Esophagus muscularis mucosa (tissue), 4 donors: ENCODE measurements at regions of chr17 and their contacts with region 1.

Region 1: DNA sequence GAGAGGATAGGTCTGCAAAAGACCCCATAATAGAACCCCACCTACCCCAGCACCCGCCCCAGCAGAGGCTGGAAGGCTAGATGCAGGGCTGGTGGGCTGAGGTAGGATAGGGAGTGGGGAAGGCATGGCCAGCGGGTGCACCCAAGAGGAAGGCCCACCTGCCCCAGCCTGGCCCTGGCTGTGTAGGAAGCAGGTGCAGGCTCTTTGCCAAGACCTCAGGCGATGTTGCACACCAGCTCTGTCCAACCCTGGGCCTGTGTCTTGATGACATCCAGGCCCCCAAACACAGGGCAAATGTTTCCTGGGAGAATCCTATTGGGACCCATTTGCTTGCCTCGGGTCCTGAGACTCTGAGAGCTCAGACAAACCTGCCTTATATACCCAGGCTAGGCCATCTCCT is 12.2 kb downstream of the UNC119 start:
- DNase-seq: no peak
- H3K4me3 ChIP-seq: no peak overlapping the region
- H3K27ac ChIP-seq: no peak overlapping the region
- H3K4me1 ChIP-seq: no peaks in the 10 kb centered on the region
- H3K27me3 ChIP-seq: no peaks in the 10 kb centered on the region
- CTCF ChIP-seq: no peak
- EP300 ChIP-seq: no peak
- POLR2A ChIP-seq: no peak

Region 2: DNA sequence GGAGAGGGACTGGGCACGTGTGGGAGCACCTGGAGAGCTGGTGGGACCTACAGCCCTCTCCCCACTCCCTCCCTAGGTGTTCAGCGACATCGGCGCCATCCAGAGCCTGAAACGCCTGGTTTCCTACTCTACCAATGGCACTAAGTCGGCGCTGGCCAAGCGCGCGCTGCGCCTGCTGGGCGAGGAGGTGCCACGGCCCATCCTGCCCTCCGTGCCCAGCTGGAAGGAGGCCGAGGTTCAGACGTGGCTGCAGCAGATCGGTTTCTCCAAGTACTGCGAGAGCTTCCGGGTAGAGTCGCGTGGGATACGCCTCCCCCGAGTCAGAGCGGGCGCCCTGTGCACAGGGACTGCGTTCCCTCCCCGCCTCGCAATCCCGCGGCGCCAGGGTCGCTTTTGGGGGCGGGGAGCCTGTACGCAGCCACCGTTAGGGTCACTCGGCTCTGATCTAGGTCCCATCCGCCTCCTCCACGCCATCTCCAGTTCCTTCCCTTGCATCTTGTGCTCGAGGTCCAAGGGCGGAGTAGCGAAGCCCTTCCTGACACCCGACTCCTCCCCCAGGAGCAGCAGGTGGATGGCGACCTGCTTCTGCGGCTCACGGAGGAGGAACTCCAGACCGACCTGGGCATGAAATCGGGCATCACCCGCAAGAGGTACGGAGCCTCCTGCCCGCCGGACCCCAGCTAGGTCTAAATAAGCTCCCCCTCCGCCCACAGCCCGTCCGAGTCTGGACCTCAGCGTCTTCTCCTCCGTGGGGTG is 155.8 kb before region 1 on chr17:
- intact Hi-C with region 1: no loop called
- DNase-seq: no peak
- H3K4me3 ChIP-seq: peak overlapping the region; percentile 46 to 59 (median 46)
- H3K27ac ChIP-seq: no peak overlapping the region
- H3K4me1 ChIP-seq: peaks cover 8 to 15% (median 11%) of the 10 kb centered on the region in 4 donors
- H3K27me3 ChIP-seq: no peaks in the 10 kb centered on the region
- CTCF ChIP-seq: no peak
- EP300 ChIP-seq: no peak
- POLR2A ChIP-seq: no peak

Region 3: DNA sequence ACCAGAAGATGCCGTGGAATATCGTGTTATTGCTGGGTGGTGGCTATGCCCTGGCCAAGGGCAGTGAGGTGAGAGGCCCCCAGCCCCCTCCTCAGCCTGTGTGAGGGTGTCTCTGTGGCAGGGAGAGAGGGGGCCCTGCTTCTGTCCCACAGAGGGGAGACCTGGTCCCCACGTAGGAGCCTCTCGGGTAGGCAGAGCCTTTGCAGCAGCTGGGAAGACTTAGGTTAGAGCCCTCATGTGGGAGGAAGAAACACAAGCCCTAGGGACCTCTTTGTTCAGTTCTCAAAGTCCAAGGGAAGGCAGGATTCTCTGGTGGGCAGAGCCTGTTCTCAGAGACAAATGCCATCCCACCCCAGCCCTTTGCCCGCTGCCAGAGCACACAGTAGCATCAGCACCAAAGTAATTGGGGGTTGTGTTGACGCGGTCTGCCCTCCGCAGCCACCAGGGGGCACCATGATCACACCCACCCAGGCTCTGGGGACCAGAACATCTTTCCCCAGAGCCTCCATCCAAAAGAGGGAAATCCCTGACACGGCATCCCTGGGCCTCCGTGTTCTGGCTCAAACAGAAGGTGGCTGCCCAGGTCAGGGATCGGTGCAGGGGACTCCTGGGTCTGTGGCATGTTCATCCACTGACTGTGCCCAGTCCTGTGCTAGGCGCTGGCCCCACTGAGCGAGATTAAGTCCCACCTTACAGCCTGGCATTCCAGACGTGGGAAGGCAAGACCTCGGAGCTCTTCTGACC is 45.6 kb before region 1 on chr17:
- intact Hi-C with region 1: loop called (anchors 2 kb)
- DNase-seq: peak; percentile 94
- H3K4me3 ChIP-seq: no peak overlapping the region
- H3K27ac ChIP-seq: no peak overlapping the region
- H3K4me1 ChIP-seq: no peaks in the 10 kb centered on the region
- H3K27me3 ChIP-seq: peaks cover 0 to 52% (median 2%) of the 10 kb centered on the region in 4 donors
- CTCF ChIP-seq: peak; percentile 76 to 87 (median 77)
- EP300 ChIP-seq: no peak
- POLR2A ChIP-seq: no peak